Endothelial cell of umbilical vein (primary cell): ENCODE measurements at regions of chr16 and their contacts with region 1.

Region 1: DNA sequence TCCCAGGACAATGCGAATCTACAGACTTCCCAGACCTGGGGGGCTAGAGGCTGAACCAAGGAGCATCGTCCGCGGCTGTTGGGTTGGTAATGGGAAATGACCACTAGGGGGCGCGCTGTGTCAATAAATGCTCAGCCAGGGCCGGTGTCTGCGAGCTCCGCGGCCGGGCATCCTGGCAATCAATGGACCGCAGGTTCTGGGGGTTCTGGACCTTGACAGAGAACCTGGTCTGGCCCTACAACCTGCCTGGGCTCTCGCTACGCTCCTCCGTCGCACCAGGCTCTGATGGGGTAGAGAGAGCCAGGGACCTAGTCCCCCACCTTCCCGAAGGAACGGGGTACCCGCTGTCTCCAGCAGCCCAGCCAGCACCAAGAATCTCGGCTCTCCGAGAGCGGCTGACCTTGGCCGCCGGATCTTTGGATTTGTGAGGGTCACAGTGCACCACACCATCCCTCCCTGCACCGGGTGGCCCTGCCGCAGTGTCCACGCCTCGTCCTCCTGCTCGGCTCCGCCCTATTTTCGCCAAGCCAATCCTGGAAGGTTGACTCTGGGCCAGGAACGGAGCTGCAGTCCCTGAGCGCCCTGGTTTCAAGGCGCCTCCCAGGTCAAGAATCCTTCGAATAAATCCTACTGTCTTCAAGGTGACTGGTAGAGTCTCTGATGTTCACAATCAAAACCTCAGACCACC is 20.4 kb upstream of the BEAN1 start:
- DNase-seq: peak; percentile 75
- H3K4me3 ChIP-seq: peak overlapping the region in 2 of 3 experiments; percentile 12 to 31
- H3K27ac ChIP-seq: peak overlapping the region; percentile 27
- H3K4me1 ChIP-seq: peaks cover 34% of the 10 kb centered on the region
- H3K27me3 ChIP-seq: no peaks in the 10 kb centered on the region
- CTCF ChIP-seq: peak; percentile 81
- POLR2A ChIP-seq: peak; percentile 76

Region 2: GRCh38 chr16:66315210-66315825 is 91.4 kb before region 1 on chr16:
- CTCF ChIA-PET with region 1: no interaction called
- POLR2A ChIA-PET with region 1: no interaction called
- dilution Hi-C with region 1: no loop called
- intact Hi-C with region 1: no loop called
- DNase-seq: peak; percentile 73
- H3K4me3 ChIP-seq: no peak overlapping the region
- H3K27ac ChIP-seq: no peak overlapping the region
- H3K4me1 ChIP-seq: no peaks in the 10 kb centered on the region
- H3K27me3 ChIP-seq: no peaks in the 10 kb centered on the region
- CTCF ChIP-seq: peak; percentile 93 to 96
- POLR2A ChIP-seq: no peak

Region 3: GRCh38 chr16:66357153-66357928 is 49.3 kb before region 1 on chr16:
- CTCF ChIA-PET with region 1: interaction called, 29 read pairs
- POLR2A ChIA-PET with region 1: interaction called, 4 read pairs
- dilution Hi-C with region 1: no loop called
- intact Hi-C with region 1: loop called (anchors 1 kb)
- DNase-seq: peak; percentile 93
- H3K4me3 ChIP-seq: no peak overlapping the region
- H3K27ac ChIP-seq: peak overlapping the region; percentile 99
- H3K4me1 ChIP-seq: peaks cover 51% of the 10 kb centered on the region
- H3K27me3 ChIP-seq: no peaks in the 10 kb centered on the region
- CTCF ChIP-seq: peak; percentile 74 to 84
- POLR2A ChIP-seq: no peak

Region 4: DNA sequence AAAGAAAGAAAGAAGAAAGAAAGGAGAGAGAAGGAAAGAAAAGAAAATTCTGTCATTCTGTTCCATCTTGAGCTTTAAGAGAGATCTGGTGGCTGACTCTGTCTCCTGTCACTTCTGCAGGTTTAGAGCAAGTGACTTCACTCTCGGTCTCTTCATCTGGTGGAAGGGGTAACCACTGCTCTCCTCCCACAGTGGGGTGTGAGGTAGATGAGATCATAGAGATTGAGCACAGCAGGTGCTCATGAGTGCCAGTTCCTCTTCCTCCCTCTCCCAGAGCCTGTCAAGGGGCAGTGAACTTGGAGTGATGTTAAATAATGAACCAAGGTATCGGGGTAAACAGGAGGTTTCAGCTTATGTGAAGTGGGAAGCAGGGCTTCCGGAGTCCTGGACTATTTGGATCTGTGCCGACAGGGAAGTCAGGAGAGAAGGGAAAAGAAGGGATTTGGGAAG is 68.1 kb after region 1 on chr16:
- CTCF ChIA-PET with region 1: interaction called, 18 read pairs
- POLR2A ChIA-PET with region 1: no interaction called
- dilution Hi-C with region 1: no loop called
- intact Hi-C with region 1: loop called (anchors 1 kb)
- DNase-seq: peak; percentile 31
- H3K4me3 ChIP-seq: no peak overlapping the region
- H3K27ac ChIP-seq: no peak overlapping the region
- H3K4me1 ChIP-seq: peaks cover 5% of the 10 kb centered on the region
- H3K27me3 ChIP-seq: peaks cover 0 to 8% of the 10 kb centered on the region in 2 experiments
- CTCF ChIP-seq: no peak
- POLR2A ChIP-seq: no peak

Region 5: DNA sequence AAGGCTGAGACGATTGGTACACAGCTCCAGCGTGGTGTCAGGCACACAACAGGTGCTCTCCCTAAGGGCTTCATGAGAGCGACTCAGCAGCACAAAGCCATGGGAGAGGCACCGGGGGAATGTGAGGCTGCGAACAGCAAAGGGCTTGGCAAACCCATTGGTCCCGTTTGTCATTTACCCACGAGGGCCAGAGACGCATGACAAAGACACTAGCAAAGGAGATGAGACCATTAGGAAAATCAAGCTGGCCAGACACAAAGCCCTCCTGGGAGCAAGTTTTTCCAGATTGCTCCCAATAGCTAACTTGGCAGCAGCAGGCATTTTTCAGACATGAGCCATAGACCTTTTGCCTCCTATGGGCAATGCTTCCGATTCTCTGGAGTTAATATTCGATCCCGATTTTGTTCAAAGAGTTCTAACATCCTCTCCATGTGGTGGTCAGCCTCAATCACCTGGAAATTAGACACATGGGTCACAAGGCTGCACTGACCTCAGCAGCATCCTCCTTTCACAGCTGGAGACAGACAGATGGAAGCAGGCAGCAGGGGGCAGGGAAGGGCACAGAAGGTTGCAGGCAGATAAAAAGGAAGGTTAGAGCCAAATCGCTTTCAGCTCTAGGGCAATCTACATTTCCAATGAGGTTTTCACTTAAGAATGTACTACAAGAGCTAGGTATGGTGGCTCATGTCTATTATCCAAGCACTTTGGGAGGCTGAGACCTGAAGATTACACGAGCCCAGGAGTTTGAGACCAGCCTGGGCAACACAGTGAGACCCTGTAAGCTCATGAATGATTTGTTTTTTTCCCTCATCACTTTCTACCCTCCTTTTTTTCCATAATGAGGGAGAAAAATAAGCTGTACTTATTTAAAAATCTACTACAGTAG is 105.2 kb after region 1 on chr16:
- CTCF ChIA-PET with region 1: interaction called, 56 read pairs
- POLR2A ChIA-PET with region 1: no interaction called
- dilution Hi-C with region 1: no loop called
- intact Hi-C with region 1: loop called (anchors 1 kb)
- DNase-seq: peak; percentile 70
- H3K4me3 ChIP-seq: no peak overlapping the region
- H3K27ac ChIP-seq: peak overlapping the region; percentile 86
- H3K4me1 ChIP-seq: peaks cover 58% of the 10 kb centered on the region
- H3K27me3 ChIP-seq: no peaks in the 10 kb centered on the region
- CTCF ChIP-seq: no peak
- POLR2A ChIP-seq: no peak

Region 6: GRCh38 chr16:66588981-66589713 is 182.5 kb after region 1 on chr16:
- CTCF ChIA-PET with region 1: interaction called, 24 read pairs
- POLR2A ChIA-PET with region 1: no interaction called
- dilution Hi-C with region 1: no loop called
- intact Hi-C with region 1: loop called (anchors 5 kb)
- DNase-seq: peak; percentile 45
- H3K4me3 ChIP-seq: no peak overlapping the region
- H3K27ac ChIP-seq: no peak overlapping the region
- H3K4me1 ChIP-seq: peaks cover 7% of the 10 kb centered on the region
- H3K27me3 ChIP-seq: no peaks in the 10 kb centered on the region
- CTCF ChIP-seq: peak; percentile 62 to 76
- POLR2A ChIP-seq: no peak

Region 7: DNA sequence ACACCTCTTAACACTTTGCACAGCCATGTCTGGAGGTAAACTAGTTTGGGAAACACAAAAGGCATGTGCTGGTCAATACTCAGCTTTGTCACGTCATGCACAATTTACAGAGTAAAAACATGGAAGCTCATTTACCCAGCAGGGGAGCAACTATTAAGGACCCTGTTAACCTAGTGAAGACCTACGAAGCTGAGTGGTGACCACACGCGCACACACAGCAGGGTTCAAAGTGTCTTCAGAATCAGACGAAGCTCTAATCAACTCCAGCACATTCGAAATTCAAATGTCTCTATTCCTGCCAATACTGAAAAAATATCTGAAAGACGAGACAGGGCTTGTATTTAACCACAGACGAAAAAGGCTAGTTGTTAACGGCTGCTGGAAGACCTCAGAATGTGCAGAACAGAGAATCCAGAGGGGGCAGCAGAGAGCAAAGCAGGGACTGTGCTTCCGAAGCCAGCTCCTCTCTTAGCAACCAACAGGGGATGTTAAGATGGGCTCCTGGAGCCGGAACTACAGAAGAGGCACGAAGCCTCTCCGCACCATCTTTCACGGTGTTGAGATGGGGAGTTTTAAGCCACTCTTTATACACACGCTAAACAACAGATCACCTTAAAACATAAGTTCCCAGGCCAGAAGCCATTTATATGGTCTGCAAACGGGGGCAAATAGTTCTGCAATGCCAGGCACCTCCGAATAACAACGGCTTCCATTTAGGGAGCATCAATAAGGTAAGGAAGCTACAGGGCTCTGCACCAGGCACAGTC is 244.2 kb after region 1 on chr16:
- CTCF ChIA-PET with region 1: interaction called, 3 read pairs
- POLR2A ChIA-PET with region 1: no interaction called
- dilution Hi-C with region 1: no loop called
- intact Hi-C with region 1: loop called (anchors 5 kb)
- DNase-seq: peak; percentile 81
- H3K4me3 ChIP-seq: no peak overlapping the region
- H3K27ac ChIP-seq: no peak overlapping the region
- H3K4me1 ChIP-seq: no peaks in the 10 kb centered on the region
- H3K27me3 ChIP-seq: no peaks in the 10 kb centered on the region
- CTCF ChIP-seq: peak; percentile 94
- POLR2A ChIP-seq: no peak

Region 8: DNA sequence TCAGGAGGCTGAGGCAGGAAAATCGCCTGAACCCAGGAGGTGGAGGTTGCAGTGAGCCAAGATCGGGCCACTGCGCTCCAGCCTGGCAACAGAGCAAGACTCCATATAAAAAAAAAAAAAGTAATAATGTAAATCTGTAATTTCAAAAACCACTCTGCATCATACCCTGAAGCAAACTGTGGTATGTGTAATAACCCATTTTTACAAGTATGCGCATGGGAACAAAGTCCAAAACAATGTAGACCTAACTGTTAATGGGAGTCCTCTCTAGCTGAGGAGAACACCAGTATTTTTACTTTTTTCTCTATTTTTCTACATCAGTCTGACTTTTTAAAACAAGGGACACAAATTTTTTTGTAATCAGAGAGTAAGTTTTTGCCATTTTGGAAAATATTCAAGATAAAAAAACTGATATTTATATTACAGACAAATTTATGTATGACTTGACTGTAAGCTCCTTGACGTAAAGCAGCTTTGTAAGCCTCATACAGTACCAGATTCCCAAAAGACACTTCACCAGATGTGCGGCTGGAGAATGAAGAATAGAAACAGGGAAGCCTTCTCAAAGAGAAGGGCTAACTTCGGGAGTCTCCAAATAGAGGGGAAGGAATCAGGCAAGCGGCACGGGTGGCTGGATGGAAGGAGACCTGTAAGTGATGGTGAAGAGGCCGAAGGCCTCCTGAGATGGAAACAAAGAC is 264.2 kb after region 1 on chr16:
- CTCF ChIA-PET with region 1: no interaction called
- POLR2A ChIA-PET with region 1: no interaction called
- dilution Hi-C with region 1: no loop called
- intact Hi-C with region 1: no loop called
- DNase-seq: no peak
- H3K4me3 ChIP-seq: no peak overlapping the region
- H3K27ac ChIP-seq: no peak overlapping the region
- H3K4me1 ChIP-seq: no peaks in the 10 kb centered on the region
- H3K27me3 ChIP-seq: no peaks in the 10 kb centered on the region
- CTCF ChIP-seq: no peak
- POLR2A ChIP-seq: no peak

Region 9: GRCh38 chr16:66740010-66740409 is 333.3 kb after region 1 on chr16:
- CTCF ChIA-PET with region 1: no interaction called
- POLR2A ChIA-PET with region 1: no interaction called
- dilution Hi-C with region 1: no loop called
- intact Hi-C with region 1: loop called (anchors 5 kb)
- DNase-seq: peak; percentile 54
- H3K4me3 ChIP-seq: no peak overlapping the region
- H3K27ac ChIP-seq: peak overlapping the region; percentile 97
- H3K4me1 ChIP-seq: peaks cover 34% of the 10 kb centered on the region
- H3K27me3 ChIP-seq: no peaks in the 10 kb centered on the region
- CTCF ChIP-seq: peak; percentile 58 to 60
- POLR2A ChIP-seq: no peak